ENCODE measurements at regions of chr1 and their contacts with region 1.

Region 1: GRCh38 chr1:160618763-160619274 is 28.0 kb downstream of the SLAMF1 start:
- DNase-seq: no peak
- H3K4me3 ChIP-seq: no peak overlapping the region
- H3K27ac ChIP-seq: no peak overlapping the region
- H3K4me1 ChIP-seq: no peaks in the 10 kb centered on the region
- H3K27me3 ChIP-seq: no peaks in the 10 kb centered on the region
- CTCF ChIP-seq: no peak
- EP300 ChIP-seq: no peak
- POLR2A ChIP-seq: no peak

Region 2: DNA sequence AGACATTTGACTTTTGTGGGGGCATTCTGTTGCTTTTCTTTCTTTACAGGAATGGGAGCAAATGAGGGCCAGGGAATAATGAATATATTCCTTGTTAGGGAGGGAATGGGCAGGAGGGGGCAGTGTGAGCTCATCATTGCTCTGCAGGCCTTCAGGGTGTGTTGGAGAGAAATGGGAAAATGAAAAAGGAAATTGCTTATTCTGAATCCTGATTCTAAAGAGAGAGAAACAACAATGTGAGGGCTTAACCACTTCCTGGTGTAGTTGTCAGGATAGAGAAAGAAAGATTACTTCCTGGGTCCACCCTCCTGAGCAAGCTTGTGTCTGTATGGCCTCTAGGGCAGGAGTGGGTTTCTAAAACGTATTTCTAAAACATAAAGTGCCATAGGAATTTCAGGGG is 190.2 kb before region 1 on chr1:
- intact Hi-C with region 1: loop called in 1 of 4 experiments (anchors 10 kb)
- DNase-seq: peak in 2 of 5 donors; percentile 44 to 60
- H3K4me3 ChIP-seq: no peak overlapping the region
- H3K27ac ChIP-seq: no peak overlapping the region
- H3K4me1 ChIP-seq: no peaks in the 10 kb centered on the region
- H3K27me3 ChIP-seq: no peaks in the 10 kb centered on the region
- CTCF ChIP-seq: peak in 1 of 3 donors; percentile 12
- EP300 ChIP-seq: no peak
- POLR2A ChIP-seq: no peak

Measured in ovary (tissue), 10 donors.